ENCODE measurements at regions of chr1 and their contacts with region 1.

Region 1: GRCh38 chr1:186375088-186375953 is at the starts of genes ODR4 and TPR:
- DNase-seq: peak; percentile 99
- H3K4me3 ChIP-seq: peak within 1 kb of the TSS; percentile 91 to 99 (median 92)
- H3K27ac ChIP-seq: peak within 1 kb of the TSS; percentile 94
- H3K4me1 ChIP-seq: peaks cover 8% of the 10 kb centered on the region
- H3K27me3 ChIP-seq: no peaks in the 10 kb centered on the region
- CTCF ChIP-seq: peak; percentile 85 to 87
- total RNA-seq, gene ODR4: 21.5 to 21.7 TPM
- total RNA-seq, gene TPR: 48.3 to 98.3 TPM

Region 2: GRCh38 chr1:186325239-186325638 is 50.1 kb before region 1 on chr1:
- CTCF ChIA-PET with region 1: no interaction called
- dilution Hi-C with region 1: no loop called
- in situ Hi-C with region 1: no loop called
- intact Hi-C with region 1: no loop called
- DNase-seq: no peak
- H3K4me3 ChIP-seq: no peak overlapping the region
- H3K27ac ChIP-seq: no peak overlapping the region
- H3K4me1 ChIP-seq: no peaks in the 10 kb centered on the region
- H3K27me3 ChIP-seq: no peaks in the 10 kb centered on the region
- CTCF ChIP-seq: peak; percentile 39 to 43

Region 3: GRCh38 chr1:186418503-186418902 is 43.2 kb after region 1 on chr1:
- CTCF ChIA-PET with region 1: no interaction called
- dilution Hi-C with region 1: no loop called
- in situ Hi-C with region 1: no loop called
- intact Hi-C with region 1: no loop called
- DNase-seq: no peak
- H3K4me3 ChIP-seq: no peak overlapping the region
- H3K27ac ChIP-seq: no peak overlapping the region
- H3K4me1 ChIP-seq: no peaks in the 10 kb centered on the region
- H3K27me3 ChIP-seq: no peaks in the 10 kb centered on the region
- CTCF ChIP-seq: no peak

Region 4: DNA sequence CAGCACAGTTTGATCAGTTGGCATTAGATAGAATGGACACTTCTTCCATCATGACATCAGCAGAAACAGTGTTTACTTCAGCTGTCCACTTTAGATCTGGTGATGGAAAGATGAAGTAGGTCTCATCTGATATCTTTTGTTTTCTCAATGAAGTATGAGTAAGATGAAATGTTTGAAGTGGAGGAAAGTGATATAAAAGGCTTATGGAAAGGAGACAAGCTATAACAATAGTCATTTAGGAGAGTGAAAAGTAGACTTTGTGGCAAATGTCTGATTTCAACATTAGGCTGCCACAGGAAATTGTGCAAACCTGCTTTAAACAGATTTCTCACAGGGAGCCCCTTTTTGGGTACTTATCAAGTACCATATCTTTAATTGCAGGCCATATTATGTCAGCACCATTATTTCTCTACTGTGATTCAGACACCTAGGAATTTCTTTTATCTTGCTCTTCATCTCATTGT is 67.4 kb after region 1 on chr1:
- CTCF ChIA-PET with region 1: no interaction called
- dilution Hi-C with region 1: no loop called
- in situ Hi-C with region 1: no loop called
- intact Hi-C with region 1: no loop called
- DNase-seq: peak; percentile 27
- H3K4me3 ChIP-seq: no peak overlapping the region
- H3K27ac ChIP-seq: peak overlapping the region; percentile 8
- H3K4me1 ChIP-seq: peaks cover 12% of the 10 kb centered on the region
- H3K27me3 ChIP-seq: no peaks in the 10 kb centered on the region
- CTCF ChIP-seq: no peak

Region 5: GRCh38 chr1:186559601-186560116 is 184.3 kb after region 1 on chr1:
- CTCF ChIA-PET with region 1: interaction called, 12 read pairs
- dilution Hi-C with region 1: no loop called
- in situ Hi-C with region 1: no loop called
- intact Hi-C with region 1: no loop called
- DNase-seq: peak; percentile 96
- H3K4me3 ChIP-seq: peak overlapping the region in 1 of 3 experiments; percentile 35
- H3K27ac ChIP-seq: peak overlapping the region; percentile 100
- H3K4me1 ChIP-seq: peaks cover 14% of the 10 kb centered on the region
- H3K27me3 ChIP-seq: no peaks in the 10 kb centered on the region
- CTCF ChIP-seq: no peak

Region 6: DNA sequence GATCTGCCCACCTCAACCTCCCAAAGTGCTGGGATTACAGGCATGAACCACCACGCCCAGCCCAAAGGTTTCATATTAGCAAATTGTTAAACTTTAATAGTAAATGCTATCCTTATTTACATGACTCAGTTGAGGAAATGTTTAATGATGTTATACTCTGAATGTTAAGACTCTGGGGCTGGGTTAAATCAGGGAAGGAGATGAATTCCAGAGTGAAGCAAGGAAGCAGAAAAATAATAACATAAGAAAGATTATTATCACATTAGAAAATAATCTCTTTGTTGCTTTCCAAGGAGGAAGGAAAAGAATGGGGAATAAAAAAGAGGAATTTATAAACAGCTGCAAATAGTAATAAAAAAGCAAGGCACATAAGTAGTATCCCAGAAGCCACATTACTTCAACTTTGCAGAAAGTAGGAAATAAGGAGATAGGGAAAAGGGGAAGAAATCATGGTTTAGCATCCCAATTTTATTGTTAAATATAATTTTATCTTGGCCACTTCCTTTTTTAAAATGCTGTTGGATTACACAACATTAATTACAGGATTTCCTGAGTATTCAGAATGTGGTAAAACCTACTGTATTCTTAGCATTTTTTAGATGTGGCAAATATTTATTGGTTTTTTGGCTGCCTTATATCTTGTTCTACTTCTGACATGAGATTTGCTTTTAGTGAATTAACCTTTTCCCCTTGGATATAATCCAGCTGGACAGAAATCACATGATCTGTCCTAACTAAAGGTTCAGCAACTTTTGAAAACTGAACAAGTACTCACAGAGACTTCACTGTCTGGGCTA is 199.8 kb after region 1 on chr1:
- CTCF ChIA-PET with region 1: no interaction called
- dilution Hi-C with region 1: no loop called
- in situ Hi-C with region 1: no loop called
- intact Hi-C with region 1: loop called (anchors 10 kb)
- DNase-seq: no peak
- H3K4me3 ChIP-seq: no peak overlapping the region
- H3K27ac ChIP-seq: no peak overlapping the region
- H3K4me1 ChIP-seq: peaks cover 3% of the 10 kb centered on the region
- H3K27me3 ChIP-seq: no peaks in the 10 kb centered on the region
- CTCF ChIP-seq: no peak

Measured in mammary epithelial cell (primary cell).